AG04449 (cell line): ENCODE measurements at regions of chr1 and their contacts with region 1.

Region 1: GRCh38 chr1:35202048-35202719 is 9.2 kb upstream of the SFPQ start:
- DNase-seq: no peak
- H3K4me3 ChIP-seq: no peak overlapping the region
- CTCF ChIP-seq: peak; percentile 91

Region 2: GRCh38 chr1:34786521-34787325 is 415.5 kb before region 1 on chr1:
- CTCF ChIA-PET with region 1: no interaction called
- POLR2A ChIA-PET with region 1: no interaction called
- DNase-seq: peak; percentile 24
- H3K4me3 ChIP-seq: no peak overlapping the region
- CTCF ChIP-seq: peak; percentile 88

Region 3: DNA sequence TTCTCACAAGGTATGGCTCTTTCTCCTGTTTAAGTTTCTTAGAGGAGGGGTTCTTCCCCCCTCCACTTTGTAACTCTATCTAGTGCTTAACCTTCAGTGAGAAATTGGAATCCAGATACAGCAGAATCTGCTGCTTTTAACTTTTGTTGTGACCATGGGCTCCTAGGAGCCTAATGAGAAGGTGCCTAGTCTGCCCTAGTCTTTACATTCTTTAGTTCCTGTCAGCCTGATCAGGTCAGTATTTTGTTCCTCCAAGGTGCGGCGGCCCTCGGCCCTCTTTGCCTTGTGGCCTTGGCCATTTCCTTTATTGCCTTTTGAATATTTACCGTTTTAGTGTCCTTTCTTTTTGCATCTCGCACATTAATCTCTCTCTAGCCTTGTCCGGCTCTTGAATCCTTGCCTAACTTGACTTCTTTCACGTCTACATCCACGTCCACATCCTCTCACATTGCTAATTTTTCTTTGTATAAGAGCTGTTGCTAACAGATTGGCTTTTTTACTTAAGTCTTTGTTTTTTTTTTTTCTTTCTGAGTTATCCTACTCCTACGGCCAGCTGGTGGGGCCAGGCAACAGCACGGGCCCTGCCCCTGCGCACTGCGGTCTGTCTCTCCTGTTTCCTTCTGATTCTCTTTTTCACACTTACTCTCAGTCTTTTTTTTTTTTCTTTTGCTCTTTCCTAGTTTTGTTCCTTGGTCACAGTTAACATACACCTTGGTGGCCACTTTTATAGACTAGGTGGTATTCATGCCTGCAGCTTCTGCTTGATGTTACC is 58.3 kb before region 1 on chr1:
- CTCF ChIA-PET with region 1: no interaction called
- POLR2A ChIA-PET with region 1: no interaction called
- DNase-seq: no peak
- H3K4me3 ChIP-seq: no peak overlapping the region
- CTCF ChIP-seq: no peak

Region 4: GRCh38 chr1:35220976-35221375 is 18.8 kb after region 1 on chr1:
- CTCF ChIA-PET with region 1: interaction called, 16 read pairs
- POLR2A ChIA-PET with region 1: no interaction called
- DNase-seq: no peak
- H3K4me3 ChIP-seq: no peak overlapping the region
- CTCF ChIP-seq: peak; percentile 30

Region 5: GRCh38 chr1:35264871-35265270 is 62.7 kb after region 1 on chr1:
- CTCF ChIA-PET with region 1: interaction called, 10 read pairs
- POLR2A ChIA-PET with region 1: interaction called, 3 read pairs
- DNase-seq: no peak
- H3K4me3 ChIP-seq: no peak overlapping the region
- CTCF ChIP-seq: no peak

Region 6: DNA sequence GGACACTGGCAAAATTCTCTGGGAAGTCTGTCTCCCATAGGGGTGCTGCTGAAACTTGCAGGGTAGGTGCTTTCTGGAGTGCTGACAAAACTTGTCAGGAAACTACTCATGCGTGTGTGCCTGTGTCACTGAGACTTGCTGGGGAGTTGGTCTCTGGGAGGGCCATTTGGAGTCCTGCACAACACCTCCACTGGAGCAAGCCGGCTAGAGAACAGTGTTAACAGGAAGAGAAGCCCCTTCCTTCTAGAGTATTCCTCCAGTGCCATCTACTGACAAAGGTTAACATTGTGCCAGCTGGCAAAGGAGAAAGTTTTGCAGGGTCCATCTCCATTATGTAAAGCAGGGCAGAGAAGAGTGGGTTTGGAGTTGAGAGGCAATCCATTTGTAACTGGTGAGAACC is 96.3 kb after region 1 on chr1:
- CTCF ChIA-PET with region 1: interaction called, 37 read pairs
- POLR2A ChIA-PET with region 1: no interaction called
- DNase-seq: no peak
- H3K4me3 ChIP-seq: no peak overlapping the region
- CTCF ChIP-seq: peak; percentile 45

Region 7: GRCh38 chr1:35443768-35444518 is 241.8 kb after region 1 on chr1:
- CTCF ChIA-PET with region 1: interaction called, 16 read pairs
- POLR2A ChIA-PET with region 1: no interaction called
- DNase-seq: no peak
- H3K4me3 ChIP-seq: no peak overlapping the region
- CTCF ChIP-seq: peak; percentile 1